Posterior cingulate gyrus (tissue), 11 donors: ENCODE measurements at regions of chr18 and their contacts with region 1.

Region 1: DNA sequence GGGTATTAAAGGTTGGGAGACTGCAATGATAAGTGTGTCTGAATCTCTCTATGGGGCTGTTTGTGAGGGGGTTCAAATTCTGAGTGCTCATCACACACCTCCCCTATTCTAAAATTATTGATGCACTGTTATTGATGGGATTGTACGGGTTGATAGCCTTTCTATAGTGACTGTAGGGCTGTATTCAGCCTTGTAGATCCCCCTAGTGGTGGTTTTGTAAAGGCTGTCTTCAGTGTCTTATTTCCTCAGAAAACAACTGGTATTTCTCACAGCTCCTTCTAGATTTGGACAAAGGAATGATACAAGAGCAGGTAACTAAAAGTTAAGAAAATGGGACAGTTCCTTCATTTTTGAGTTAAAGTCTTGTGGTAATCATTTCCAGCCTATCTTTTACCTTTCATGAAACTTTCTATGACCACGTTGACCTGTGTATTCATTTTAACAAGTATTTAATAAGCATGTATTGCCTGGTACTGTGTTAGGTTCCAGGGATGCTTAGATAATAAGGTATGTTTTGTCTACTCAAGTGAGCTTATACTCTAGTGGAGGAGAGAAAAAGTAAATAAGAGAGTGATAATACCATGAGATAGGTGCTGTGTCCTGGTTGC is 21.2 kb downstream of the SMAD4 start:
- DNase-seq: no peak

Region 2: DNA sequence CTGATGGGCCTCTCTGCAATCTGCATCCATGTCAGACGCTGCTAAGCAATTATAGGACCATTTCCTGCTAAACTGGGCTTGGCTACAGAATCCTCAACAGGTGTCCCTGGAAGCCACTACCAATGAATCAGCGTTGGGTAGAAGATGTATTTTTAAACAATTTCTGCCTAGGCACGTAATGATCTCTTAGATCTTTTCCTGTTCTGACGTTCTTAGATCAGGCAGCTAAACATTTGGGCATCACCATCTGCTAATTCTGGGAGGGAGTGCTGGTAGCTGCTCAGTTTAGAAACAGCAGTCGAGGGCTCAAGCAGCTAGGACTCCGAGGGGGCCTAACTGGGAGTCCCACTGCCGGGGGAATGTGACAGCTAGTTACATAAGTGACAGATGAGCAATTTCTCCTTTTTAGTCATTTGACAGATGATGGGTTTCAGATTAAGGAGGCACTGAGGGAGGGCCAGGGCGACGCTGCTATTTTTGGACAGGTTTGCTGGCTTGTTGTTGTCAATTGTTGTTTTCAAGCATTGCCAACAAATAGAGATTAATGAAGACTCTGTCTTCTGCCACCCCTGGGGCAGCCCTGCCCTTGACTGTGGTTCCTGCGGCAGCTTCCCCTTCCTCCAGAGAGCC is 324.1 kb before region 1 on chr18:
- intact Hi-C with region 1: no loop called
- DNase-seq: peak in 5 of 10 donors; percentile 38 to 89 (median 53)

Region 3: GRCh38 chr18:50819728-50820378 is 231.4 kb before region 1 on chr18 and contains the start of gene MRO:
- intact Hi-C with region 1: loop called (anchors 1 kb)
- DNase-seq: peak; percentile 81 to 97 (median 86)

Region 4: GRCh38 chr18:50967714-50968661 is 83.2 kb before region 1 on chr18 and contains the start of gene ELAC1:
- intact Hi-C with region 1: loop called (anchors 5 kb)
- DNase-seq: peak; percentile 55 to 96 (median 68)

Region 5: DNA sequence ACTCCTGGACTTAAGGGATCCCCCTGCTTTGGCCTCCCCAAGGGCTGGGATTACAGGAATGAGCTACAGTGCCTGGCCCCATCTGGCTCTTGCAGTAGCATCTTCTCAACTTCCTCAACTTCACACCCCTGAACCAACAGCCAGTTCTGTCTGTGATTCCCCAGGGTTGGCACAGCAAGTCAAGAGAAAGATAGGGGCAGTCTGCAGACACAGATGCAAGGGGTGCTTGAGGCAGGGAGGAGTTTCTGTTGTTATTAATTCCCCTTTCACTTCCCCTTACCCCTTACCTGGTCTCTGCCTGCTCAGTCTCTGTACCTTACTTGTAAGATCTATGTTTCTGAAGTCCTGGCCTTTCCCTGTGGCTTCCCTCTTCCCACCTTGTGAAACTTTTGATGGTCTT is 200.4 kb after region 1 on chr18:
- intact Hi-C with region 1: no loop called
- DNase-seq: no peak